ENCODE measurements at regions of chr20 and their contacts with region 1.

Region 1: GRCh38 chr20:20593447-20594170 is 118.8 kb downstream of the RALGAPA2 start:
- DNase-seq: peak in 9 of 10 donors; percentile 19 to 80 (median 52)
- H3K4me3 ChIP-seq: peak overlapping the region in 14 of 59 donors; percentile 2 to 39 (median 15)
- H3K27ac ChIP-seq: peak overlapping the region in 49 of 59 donors; percentile 4 to 80 (median 58)
- H3K27me3 ChIP-seq: no peaks in the 10 kb centered on the region
- CTCF ChIP-seq: peak in 55 of 56 donors; percentile 24 to 66 (median 51)

Region 2: DNA sequence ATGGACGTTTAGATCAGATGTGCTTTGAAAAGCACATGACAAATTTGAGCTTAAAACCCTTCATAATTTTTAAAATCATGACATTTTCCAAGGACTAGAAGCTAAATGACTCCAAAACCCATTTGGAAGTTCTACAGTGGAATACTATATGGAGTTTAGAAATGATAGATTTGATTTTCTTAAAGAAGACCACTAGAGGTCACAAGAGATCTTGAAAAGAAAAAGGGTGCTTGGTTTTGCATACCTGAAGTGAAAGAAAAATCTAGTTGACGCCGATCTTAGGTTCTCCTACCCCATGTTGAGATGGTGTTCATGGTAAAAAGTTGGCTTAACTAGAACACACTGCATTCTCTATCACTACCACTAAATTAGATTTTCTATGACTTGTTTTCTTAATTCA is 509.8 kb before region 1 on chr20:
- intact Hi-C with region 1: loop called (anchors 5 to 10 kb)
- DNase-seq: no peak
- H3K4me3 ChIP-seq: peak overlapping the region in 11 of 59 donors; percentile 3 to 41 (median 30)
- H3K27ac ChIP-seq: peak overlapping the region in 4 of 59 donors; percentile 1 to 46 (median 36)
- H3K27me3 ChIP-seq: no peaks in the 10 kb centered on the region
- CTCF ChIP-seq: peak; percentile 44 to 86 (median 68)

Region 3: DNA sequence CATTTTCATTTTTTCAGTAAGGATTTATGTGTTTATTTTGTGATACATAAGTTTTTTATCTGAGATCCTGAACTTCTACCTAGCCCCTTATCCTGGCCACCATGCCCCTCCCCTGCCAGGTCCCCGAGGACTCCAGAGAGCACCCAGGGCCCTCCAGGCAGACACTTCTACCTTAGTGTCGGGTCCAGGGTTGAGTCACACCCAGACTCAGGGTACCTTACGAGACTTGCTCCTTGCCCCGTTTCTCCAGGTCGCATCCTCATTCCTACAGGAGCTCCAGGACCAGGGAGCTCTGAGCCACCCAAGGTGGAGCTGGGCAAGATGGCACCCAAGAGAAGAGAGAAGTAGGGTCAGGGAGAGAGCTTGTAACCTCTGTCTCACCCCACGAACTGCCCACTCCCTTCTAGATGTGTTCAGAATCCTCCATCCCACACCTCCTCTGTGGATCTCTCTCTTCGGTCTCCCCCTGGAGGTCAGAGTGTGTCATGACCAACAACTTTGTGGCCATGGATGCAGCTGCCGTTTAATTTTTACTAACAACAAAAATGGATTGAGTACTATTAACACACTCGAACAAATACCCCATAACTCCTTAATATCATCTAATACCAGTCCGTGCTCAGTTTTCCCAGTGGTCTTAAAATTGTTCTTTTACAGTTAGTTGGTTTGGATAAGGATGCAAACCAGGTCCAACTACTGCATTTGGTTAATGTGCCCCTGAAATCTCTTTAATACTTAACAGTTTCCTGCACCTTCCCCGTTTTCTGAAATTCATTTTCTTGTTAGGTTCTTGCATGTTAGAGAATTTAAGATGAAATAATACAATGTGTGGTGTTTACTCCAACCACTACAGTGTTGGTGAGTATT is 356.3 kb before region 1 on chr20:
- intact Hi-C with region 1: loop called in 1 of 2 experiments (anchors 10 kb)
- DNase-seq: peak in 3 of 10 donors; percentile 23 to 39 (median 33)
- H3K4me3 ChIP-seq: no peak overlapping the region
- H3K27ac ChIP-seq: no peak overlapping the region
- H3K27me3 ChIP-seq: no peaks in the 10 kb centered on the region
- CTCF ChIP-seq: peak in 55 of 56 donors; percentile 23 to 83 (median 67)

Region 4: GRCh38 chr20:20824924-20825584 is 231.4 kb after region 1 on chr20:
- intact Hi-C with region 1: loop called (anchors 5 kb)
- DNase-seq: peak in 4 of 10 donors; percentile 36 to 64 (median 43)
- H3K4me3 ChIP-seq: peak overlapping the region in 2 of 59 donors; percentile 14 to 30
- H3K27ac ChIP-seq: no peak overlapping the region
- H3K27me3 ChIP-seq: peaks cover 0 to 11% (median 0%) of the 10 kb centered on the region in 45 donors
- CTCF ChIP-seq: peak; percentile 71 to 93 (median 84)

Measured in dorsolateral prefrontal cortex (tissue), 120 donors.